Aorta (tissue), 5 donors: ENCODE measurements at regions of chr11 and their contacts with region 1.

Region 1: DNA sequence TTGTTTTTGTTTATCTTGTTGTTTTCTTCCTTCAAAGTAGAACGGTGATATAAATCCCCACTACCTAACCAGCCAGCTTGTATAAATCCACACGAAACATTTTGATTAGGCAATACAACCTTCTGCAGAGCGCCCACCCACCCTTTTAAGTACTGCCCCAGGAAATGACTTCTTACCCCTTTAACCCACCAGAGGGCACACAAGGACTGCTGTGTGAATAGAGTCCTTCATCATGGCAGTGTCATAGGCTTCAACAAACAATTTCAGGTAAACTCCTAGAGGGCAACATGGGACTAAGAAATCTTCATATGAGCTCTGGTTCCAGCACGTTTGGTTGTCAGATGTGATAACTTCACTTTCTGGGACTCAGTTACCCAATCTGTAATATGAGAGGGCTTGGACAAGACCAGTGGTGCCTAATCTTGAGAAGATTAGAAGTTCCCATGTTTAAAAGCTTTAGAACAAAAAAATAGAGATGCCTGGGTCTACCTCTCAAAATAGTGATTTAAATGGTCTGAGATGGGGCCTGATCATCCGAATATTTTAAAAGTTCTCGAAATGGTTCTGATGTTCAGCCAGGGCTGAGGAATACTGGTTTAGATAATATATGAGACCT is 56.1 kb downstream of the PIWIL4 start:
- DNase-seq: no peak
- ATAC-seq: peak; percentile 89
- H3K4me3 ChIP-seq: no peak overlapping the region
- H3K27ac ChIP-seq: no peak overlapping the region
- H3K4me1 ChIP-seq: no peaks in the 10 kb centered on the region
- H3K27me3 ChIP-seq: no peaks in the 10 kb centered on the region

Region 2: DNA sequence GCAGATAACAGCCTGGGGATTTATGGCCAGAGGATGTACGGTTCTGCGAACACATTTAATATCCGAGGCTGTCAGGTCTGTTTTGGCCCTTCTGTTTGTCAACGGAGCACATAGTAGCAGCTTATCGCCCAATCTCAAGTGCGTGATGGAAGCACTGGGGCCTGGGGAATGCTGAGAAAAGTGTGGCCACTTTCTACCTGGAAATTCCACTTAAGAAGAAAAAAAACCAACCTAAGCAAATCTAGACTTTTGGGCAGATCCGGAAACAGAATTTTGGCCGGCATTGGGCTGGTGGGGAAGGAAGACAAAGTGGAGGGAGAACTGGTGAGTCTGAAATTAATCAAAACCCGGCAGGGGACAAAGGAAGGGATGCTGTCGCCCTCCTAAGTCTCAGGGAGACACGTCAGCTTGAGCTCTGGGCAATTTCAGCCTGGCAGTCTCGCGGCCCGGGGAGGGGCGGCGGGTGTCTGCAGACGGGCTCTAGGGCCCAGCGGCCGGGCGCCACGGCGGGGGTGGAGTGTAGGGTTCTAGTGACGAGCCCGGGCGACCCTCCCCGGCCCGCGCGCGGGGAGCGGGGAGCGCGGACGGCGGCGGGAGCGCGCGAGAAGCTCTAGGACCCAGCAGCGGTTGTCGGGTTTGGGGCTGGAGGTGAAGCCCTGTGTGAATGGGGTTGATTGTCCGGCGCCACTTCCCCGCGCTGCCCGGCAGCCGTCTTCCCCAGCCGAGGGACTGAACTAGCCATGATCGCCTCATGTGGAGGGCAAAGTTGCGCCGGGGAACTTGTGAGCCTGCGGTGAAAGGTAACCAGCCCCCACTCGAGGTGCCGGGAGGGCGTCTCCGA is 144.8 kb after region 1 on chr11 and contains the start of gene AMOTL1:
- intact Hi-C with region 1: loop called in 1 of 2 experiments (anchors 10 kb)
- DNase-seq: peak; percentile 95 to 98
- ATAC-seq: peak; percentile 95
- H3K4me3 ChIP-seq: peak within 1 kb of the TSS; percentile 78 to 99
- H3K27ac ChIP-seq: peak within 1 kb of the TSS; percentile 68 to 86
- H3K4me1 ChIP-seq: peaks cover 0 to 7% of the 10 kb centered on the region in 2 donors
- H3K27me3 ChIP-seq: no peaks in the 10 kb centered on the region
- total RNA-seq, gene AMOTL1: 66.2 to 78.5 TPM

Region 3: DNA sequence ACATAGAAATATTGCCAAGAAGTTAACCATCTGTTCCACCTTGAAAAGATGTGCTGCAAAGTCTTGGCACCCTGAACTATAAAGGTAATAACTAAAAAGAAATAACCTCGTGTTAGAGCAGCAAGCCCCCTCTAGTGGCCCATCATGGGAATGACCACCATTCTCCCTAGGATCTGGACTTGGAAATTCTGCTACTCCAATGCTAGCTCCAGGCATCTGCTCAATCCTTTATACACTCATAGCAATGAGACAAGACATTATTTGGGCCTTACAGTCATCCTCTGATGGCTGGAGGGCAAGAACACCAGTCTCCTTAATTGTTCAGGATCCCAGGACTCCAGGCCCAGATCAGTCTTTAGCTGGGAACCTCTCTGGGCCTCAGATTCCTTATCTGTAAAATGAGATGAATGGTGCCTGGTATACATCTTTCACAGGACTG is 274.1 kb after region 1 on chr11:
- intact Hi-C with region 1: loop called (anchors 1 to 2 kb)
- DNase-seq: peak in 1 of 2 donors; percentile 54
- ATAC-seq: peak; percentile 68
- H3K4me3 ChIP-seq: no peak overlapping the region
- H3K27ac ChIP-seq: no peak overlapping the region
- H3K4me1 ChIP-seq: no peaks in the 10 kb centered on the region
- H3K27me3 ChIP-seq: no peaks in the 10 kb centered on the region

Region 4: GRCh38 chr11:94973099-94973968 is 350.1 kb after region 1 on chr11 and contains the starts of genes CWC15 and KDM4D:
- intact Hi-C with region 1: loop called in 1 of 2 experiments (anchors 5 kb)
- DNase-seq: peak; percentile 97 to 98
- ATAC-seq: peak; percentile 99
- H3K4me3 ChIP-seq: peak within 1 kb of the TSS; percentile 71 to 96
- H3K27ac ChIP-seq: peak within 1 kb of the TSS in 1 of 2 donors; percentile 70
- H3K4me1 ChIP-seq: no peaks in the 10 kb centered on the region
- H3K27me3 ChIP-seq: no peaks in the 10 kb centered on the region
- total RNA-seq, gene CWC15: 49.7 to 54.7 TPM
- total RNA-seq, gene KDM4D: 0.45 to 0.75 TPM